Right cardiac atrium (tissue), 5 donors: ENCODE measurements at regions of chr2 and their contacts with region 1.

Region 1: DNA sequence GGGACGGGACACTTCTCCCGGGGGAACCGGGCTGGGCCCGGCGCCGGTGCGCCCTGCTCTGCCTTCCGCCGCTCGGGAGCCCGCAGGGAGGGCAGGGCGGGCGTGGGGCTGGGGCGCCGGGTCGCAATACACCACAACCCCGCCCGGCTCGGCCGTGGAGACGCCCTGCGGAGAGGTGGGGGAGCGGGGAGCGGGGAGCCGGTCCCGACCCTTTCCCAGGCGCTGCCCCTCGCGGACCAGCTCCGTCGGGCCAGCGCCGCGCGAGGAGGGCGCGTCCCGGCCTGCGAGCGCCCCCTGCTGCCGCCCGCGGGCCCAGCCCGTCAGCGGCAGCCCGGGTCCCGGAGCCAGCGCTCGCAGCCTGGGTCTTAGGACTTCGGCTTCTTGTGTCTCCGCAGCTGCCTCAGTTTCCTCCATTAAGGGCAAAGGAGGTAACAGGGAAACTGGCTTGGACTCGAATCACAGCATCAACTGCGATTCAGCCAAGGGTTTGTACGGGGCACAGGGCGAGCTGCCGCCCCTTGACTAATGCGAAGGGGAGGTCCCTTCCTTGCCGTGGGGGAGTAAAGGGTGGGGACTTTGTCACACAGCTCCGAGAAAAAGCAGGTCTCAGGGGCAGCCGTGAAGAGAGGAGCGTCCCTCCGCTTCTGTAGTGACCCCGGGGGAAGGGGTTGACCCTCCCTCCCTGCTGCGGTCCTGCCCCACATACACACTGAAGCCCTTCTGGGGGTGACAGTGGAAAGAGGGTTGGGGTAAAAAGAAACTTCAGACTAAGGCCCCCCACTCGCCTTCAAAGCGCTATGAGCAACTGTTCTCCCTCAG is 717 bp upstream of the ADRA2B start:
- DNase-seq: peak; percentile 43 to 80 (median 79)
- ATAC-seq: peak; percentile 75 to 82
- H3K4me3 ChIP-seq: peak overlapping the region; percentile 75
- H3K27ac ChIP-seq: no peak overlapping the region
- H3K4me1 ChIP-seq: no peaks in the 10 kb centered on the region
- H3K27me3 ChIP-seq: no peaks in the 10 kb centered on the region

Region 2: DNA sequence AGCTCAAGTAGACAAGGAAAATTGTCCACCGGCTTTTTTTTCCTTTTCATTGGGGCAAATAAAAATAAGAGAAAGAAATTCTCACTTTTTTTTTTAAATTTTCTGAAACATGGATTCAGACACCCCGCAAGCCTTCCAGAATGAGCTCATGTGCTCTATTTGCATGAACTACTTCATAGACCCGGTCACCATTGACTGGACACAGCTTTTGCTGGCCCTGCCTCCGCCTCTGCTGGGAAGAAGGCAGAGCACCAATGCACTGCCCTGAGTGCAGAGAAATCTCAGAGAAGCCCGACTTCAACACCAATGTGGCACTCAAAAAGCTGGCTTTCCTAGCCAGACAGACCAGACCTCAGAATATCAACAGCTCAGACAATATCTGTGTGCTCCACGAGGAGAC is 602.4 kb before region 1 on chr2:
- intact Hi-C with region 1: no loop called
- DNase-seq: no peak
- ATAC-seq: no peak
- H3K4me3 ChIP-seq: no peak overlapping the region
- H3K27ac ChIP-seq: no peak overlapping the region
- H3K4me1 ChIP-seq: no peaks in the 10 kb centered on the region
- H3K27me3 ChIP-seq: no peaks in the 10 kb centered on the region

Region 3: GRCh38 chr2:95719473-95720060 is 397.5 kb before region 1 on chr2:
- intact Hi-C with region 1: no loop called
- DNase-seq: no peak
- ATAC-seq: no peak
- H3K4me3 ChIP-seq: no peak overlapping the region
- H3K27ac ChIP-seq: no peak overlapping the region
- H3K4me1 ChIP-seq: no peaks in the 10 kb centered on the region
- H3K27me3 ChIP-seq: no peaks in the 10 kb centered on the region

Region 4: DNA sequence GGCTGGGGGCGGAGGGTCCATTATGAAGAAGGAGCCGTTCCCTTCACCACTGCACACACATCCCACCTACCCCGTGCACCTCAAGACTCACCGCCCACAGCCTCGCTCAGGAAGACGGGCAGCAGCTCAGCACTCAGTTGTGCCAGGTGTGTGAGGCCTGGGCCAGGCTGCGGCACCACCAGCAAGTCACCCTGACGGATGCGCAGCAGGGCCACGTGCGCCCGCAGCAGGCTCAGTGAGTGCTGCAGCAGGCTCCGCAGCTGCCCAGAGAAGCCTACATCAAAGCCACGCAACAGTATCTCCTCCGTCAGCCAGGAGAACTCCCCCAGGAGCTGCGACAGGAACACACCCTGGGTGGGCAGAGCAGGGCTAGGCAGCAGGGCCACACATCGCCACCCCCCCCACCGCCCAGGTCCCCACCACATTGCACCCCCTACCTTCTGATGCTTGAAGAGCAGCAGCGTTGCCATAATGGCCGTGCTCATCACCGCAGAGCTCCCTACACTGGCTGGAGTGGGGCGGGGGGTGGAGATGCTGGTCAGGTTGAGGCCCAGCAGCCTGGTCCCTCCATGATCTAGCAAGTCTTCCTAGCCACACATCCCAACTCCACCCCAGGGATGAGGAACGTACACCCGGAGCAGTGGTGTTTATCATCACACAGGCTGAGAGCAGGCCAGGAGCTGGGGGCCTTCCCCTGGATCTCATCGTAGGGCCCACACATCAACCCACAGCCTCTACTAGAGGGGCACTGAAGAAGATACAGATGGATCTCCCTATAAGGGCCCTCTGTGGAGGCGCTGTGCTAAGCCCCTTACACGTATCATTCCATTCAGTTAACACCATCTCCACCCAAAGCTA is 92.5 kb before region 1 on chr2:
- intact Hi-C with region 1: loop called (anchors 10 kb)
- DNase-seq: no peak
- ATAC-seq: no peak
- H3K4me3 ChIP-seq: no peak overlapping the region
- H3K27ac ChIP-seq: no peak overlapping the region
- H3K4me1 ChIP-seq: no peaks in the 10 kb centered on the region
- H3K27me3 ChIP-seq: no peaks in the 10 kb centered on the region

Region 5: DNA sequence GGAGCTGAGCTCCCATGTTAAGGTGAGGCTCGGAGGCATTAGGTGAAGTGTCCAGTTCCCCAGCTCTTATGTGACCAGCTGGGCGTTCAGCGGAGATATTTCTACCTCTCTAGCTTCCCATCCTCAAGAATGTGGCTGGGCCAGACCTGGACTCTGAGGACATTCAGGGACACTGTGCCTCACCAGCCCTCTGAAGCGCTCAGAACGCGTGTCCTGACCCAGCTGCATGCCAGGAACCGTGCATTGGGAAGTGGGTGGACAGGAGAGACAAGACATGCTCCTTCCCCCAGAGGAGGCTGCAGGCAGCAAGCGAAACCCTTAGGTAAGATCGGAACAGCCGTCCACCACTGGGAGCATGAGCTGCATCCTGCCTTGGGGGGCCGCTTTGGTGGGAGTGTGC is 44.3 kb before region 1 on chr2:
- intact Hi-C with region 1: loop called in 1 of 4 experiments (anchors 5 kb)
- DNase-seq: peak in 1 of 3 donors; percentile 18
- ATAC-seq: no peak
- H3K4me3 ChIP-seq: no peak overlapping the region
- H3K27ac ChIP-seq: no peak overlapping the region
- H3K4me1 ChIP-seq: no peaks in the 10 kb centered on the region
- H3K27me3 ChIP-seq: no peaks in the 10 kb centered on the region

Region 6: DNA sequence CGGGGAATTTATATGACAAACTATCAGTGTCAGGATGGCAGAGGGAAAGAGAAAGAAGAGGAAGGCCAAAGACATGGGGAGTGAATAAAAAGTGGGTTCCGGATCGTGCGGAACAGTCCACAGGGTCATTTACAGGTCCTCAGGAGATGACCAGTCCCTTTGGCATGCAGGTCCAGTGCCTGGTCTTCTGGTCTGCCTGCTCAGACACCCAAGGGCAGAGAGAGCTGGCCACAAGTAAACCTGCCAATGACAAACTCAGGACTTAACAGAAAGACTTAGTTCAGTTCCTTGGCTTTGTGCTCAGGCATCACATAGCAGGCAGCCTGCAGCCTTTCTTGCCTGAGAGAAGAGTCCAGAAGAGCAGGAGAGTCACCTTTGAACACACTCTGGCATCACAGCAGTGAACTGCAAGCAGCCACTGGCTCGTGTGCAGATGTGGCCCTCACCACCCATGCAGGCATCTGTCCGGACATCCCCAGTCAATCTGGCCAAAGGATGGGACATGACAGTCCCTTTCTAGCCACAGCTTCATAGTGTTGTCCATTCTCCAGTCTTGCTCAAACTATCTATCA is 134.7 kb after region 1 on chr2:
- intact Hi-C with region 1: no loop called
- DNase-seq: peak; percentile 82 to 89 (median 82)
- ATAC-seq: peak; percentile 72 to 77
- H3K4me3 ChIP-seq: no peak overlapping the region
- H3K27ac ChIP-seq: peak overlapping the region; percentile 78
- H3K4me1 ChIP-seq: peaks cover 18% of the 10 kb centered on the region
- H3K27me3 ChIP-seq: no peaks in the 10 kb centered on the region